ENCODE measurements at regions of chr9 and their contacts with region 1.

Region 1: GRCh38 chr9:127734747-127735529 is at the start of gene TOR2A:
- DNase-seq: peak; percentile 99
- H3K4me3 Mint-ChIP-seq: peak within 1 kb of the TSS; percentile 74
- H3K27ac Mint-ChIP-seq: peak within 1 kb of the TSS; percentile 76
- H3K4me1 Mint-ChIP-seq: peaks cover 12% of the 10 kb centered on the region
- H3K27me3 Mint-ChIP-seq: no peaks in the 10 kb centered on the region
- total RNA-seq, gene TOR2A: 12.7 to 16.2 TPM

Region 2: DNA sequence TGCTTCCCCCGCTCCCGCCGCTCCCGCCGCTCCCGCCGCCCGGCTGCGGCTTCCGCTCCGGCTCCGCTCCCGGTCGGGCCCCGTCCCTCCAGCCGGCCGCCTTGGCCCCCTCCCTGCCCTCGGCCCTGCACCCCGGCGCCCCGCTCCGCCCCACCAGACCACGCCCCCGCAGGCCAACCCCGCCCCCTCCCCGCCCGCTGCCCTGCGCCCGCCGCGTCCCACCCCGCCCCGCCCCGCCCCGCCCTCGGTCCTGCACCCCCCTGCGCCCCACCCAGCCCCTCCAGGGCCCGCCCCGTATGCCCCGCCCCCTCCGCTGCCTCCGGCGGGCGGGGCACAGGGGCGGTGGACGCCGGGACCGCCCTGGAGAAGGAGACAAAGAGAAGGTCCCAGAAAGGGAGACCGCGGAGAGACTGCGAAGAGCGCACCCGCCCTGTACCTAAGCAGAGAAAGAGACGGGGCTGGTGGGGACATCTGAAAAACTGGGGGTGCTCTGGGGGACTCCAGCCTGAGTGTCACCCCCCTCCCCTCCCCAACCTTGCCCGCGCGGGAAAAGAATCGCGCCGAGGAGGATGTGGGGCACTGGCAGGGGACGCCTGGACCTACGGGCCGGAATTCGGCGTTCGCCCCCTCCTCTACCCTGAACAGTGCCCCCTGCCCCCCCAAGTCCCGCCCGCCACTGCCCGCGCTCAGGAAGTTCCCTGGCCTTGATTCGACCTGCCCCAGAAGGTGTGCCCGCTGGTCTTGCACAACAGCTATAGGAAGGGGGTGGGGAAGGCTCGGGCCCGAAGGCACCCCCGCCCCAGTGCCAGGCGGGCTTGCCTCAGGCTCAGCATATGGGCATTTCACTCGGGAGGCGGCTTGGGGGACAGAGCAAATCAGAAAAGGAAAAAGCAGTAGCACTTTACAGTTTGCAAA is 165.7 kb before region 1 on chr9:
- CTCF ChIA-PET with region 1: interaction called, 10 read pairs
- POLR2A ChIA-PET with region 1: no interaction called
- intact Hi-C with region 1: no loop called
- DNase-seq: peak; percentile 85
- H3K4me3 Mint-ChIP-seq: peak overlapping the region; percentile 81
- H3K27ac Mint-ChIP-seq: peak overlapping the region; percentile 84
- H3K4me1 Mint-ChIP-seq: peaks cover 35% of the 10 kb centered on the region
- H3K27me3 Mint-ChIP-seq: no peaks in the 10 kb centered on the region

Region 3: GRCh38 chr9:127707726-127708147 is 27.2 kb before region 1 on chr9:
- CTCF ChIA-PET with region 1: interaction called, 17 read pairs
- POLR2A ChIA-PET with region 1: interaction called, 3 read pairs
- intact Hi-C with region 1: no loop called
- DNase-seq: peak; percentile 63
- H3K4me3 Mint-ChIP-seq: no peak overlapping the region
- H3K27ac Mint-ChIP-seq: no peak overlapping the region
- H3K4me1 Mint-ChIP-seq: peaks cover 22% of the 10 kb centered on the region
- H3K27me3 Mint-ChIP-seq: no peaks in the 10 kb centered on the region

Region 4: DNA sequence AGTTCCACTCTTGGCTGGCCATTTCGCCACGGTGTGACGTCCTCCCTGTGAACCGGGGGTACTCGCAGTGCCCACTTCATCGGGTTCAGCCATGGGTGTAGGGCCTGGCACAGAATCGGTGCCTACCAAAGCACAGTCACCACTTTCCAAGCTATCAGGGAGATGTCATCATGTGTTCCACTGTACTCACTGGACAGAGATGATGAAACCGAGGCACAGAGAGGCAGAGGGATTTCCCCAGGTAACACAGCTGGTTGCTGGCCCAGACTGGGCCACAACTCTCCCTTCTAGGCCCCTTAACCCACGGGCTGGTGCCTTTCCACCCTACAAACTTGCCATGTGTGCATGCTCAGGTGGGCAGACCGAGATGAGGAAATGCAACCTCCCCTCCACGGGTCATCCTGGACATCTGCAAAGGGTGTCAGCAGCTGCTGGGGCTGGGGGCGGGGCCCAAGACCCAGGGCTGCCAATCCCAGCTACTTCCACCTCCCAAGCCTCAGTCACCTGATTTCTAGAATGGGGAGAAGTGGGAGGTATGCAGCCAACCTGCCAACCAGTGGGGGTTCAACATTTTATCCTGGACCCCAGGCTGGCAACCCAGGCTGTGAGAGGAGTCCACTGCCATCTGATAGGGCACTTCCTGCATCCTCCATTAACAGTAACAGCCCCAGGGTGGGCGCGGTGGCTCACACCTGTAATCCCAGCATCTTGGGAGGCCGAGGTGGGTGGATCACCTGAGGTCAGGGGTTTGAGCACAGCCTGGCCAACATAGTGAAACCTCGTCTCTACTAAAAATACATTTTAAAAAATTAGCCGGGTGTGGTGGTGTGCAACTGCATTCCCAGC is 44.4 kb after region 1 on chr9:
- CTCF ChIA-PET with region 1: interaction called, 56 read pairs
- POLR2A ChIA-PET with region 1: interaction called, 13 read pairs
- intact Hi-C with region 1: no loop called
- DNase-seq: peak; percentile 85
- H3K4me3 Mint-ChIP-seq: peak overlapping the region; percentile 99
- H3K27ac Mint-ChIP-seq: peak overlapping the region; percentile 98
- H3K4me1 Mint-ChIP-seq: peaks cover 59% of the 10 kb centered on the region
- H3K27me3 Mint-ChIP-seq: no peaks in the 10 kb centered on the region

Region 5: DNA sequence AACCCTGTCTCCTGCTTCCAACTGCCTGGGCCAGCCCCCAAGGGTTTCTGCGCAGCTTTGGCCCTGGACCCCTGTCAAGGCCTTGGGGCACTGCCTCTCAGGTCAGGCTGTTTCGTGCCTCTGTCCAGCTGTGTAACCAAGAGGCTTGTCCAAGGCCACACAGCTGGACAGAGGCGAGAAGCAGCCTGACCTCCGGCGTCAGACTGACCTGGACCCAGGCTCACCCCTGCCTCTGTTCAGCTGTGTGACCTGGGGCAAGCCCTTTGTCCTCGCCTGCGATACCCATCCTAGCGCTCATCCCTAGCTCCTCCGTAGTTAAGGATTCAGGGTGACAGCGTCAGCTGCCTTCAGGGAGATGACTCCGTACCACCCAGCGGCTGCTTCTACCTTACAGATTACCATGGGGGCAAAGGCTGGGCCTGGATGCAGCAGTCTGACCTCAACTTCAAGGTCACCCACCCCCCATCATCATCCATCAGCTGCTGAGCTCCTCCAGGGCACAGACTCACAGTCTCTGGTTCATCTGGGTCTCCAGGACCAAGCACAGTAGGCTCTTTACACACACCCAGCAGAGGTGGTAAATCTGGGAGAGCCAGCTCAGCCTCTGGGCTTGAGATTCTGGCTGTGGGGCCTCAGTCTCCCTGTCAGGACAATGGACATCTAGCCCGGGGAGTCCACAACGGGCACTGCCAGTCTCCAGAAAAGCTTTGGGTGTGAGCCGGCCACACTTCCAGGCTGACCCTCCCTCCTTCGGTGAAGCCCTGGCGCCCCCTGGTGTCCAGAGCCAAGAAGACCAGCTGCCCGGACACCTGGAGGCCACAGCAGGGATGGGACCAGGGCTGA is 134.6 kb after region 1 on chr9:
- CTCF ChIA-PET with region 1: interaction called, 84 read pairs
- POLR2A ChIA-PET with region 1: interaction called, 4 read pairs
- intact Hi-C with region 1: loop called (anchors 1 kb)
- DNase-seq: peak; percentile 89
- H3K4me3 Mint-ChIP-seq: no peak overlapping the region
- H3K27ac Mint-ChIP-seq: no peak overlapping the region
- H3K4me1 Mint-ChIP-seq: peaks cover 13% of the 10 kb centered on the region
- H3K27me3 Mint-ChIP-seq: no peaks in the 10 kb centered on the region